Posterior vena cava (tissue), 2 donors: ENCODE measurements at regions of chr14 and their contacts with region 1.

Region 1: DNA sequence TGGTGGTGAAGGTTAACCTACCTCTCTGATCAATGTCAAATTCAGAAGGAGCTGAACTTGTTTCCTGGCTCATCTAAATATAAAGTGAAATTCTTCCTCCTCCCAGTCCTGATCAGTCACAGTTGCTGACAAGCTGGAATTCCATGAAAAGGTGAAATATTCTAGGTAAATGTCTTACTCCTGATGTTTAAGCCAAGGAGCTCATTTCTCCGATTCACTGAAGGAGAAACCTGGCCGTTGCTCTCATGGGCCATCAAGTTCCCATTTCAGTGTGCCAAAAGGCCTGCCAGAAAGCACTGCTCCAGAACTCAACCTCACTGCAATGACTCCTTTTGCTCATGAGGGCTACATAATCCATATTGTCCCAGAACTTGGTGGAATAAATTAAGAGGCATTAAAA is 707.5 kb downstream of the GALC start:
- DNase-seq: no peak

Region 2: DNA sequence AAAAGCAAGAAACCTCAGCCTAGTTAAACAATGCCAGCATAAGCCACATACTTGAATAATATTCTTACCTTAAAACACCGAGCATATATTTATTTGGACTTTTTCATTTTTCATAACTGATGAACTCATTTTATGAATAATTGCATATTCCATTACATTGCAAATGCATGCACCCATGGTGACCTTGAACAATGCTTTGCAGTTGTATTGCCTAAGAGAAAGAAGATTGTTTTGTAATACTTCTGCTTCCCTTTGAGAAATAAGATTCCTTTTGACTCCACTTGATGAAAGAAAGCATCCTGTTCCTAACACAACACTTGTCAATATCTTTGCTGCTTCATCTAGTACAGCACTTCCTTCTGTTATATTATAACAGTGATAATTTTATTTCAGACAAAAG is 573.3 kb before region 1 on chr14:
- intact Hi-C with region 1: loop called in 1 of 2 experiments (anchors 5 kb)
- DNase-seq: no peak